ENCODE measurements at regions of chr17 and their contacts with region 1.

Region 1: GRCh38 chr17:30093463-30094147 is 23.0 kb upstream of the NSRP1 start:
- DNase-seq: peak; percentile 42
- ATAC-seq: peak; percentile 92
- H3K4me3 ChIP-seq: no peak overlapping the region
- H3K27ac ChIP-seq: no peak overlapping the region
- H3K4me1 ChIP-seq: peaks cover 3% of the 10 kb centered on the region; the same call in 1 of the 2 replicates
- H3K27me3 ChIP-seq: no peaks in the 10 kb centered on the region
- CTCF ChIP-seq: peak; percentile 84

Region 2: DNA sequence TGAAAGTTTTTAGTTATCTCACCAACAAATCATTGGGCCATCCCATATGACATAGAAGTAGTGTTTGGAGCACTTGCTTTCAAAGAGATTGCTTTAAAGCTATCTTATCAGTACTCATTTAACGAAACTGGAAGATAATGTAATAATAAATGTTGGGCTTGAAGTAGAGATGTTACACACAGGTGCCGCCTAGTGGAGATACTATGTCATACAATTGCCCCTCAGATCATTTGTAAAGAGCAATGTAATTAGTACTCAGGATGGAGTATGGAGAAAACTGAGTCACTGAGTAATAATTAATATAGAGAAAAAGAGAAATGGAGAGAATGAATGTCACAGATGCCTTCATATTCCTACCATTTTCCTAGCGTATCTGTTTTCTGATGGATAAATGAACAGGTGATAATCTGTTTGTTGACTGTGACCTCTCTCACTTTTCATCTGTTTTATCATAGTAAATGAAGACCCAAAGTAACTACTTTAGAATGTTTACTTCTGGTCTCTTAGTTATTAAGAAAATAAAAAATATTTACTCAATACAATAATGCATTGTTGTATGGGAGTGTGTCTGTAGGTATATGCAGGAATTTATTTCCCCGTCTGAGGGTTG is 71.8 kb before region 1 on chr17:
- CTCF ChIA-PET with region 1: interaction called, 13 read pairs
- POLR2A ChIA-PET with region 1: interaction called, 3 read pairs
- in situ Hi-C with region 1: no loop called
- intact Hi-C with region 1: loop called (anchors 1 kb)
- DNase-seq: peak; percentile 28
- ATAC-seq: peak; percentile 80
- H3K4me3 ChIP-seq: no peak overlapping the region
- H3K27ac ChIP-seq: no peak overlapping the region
- H3K4me1 ChIP-seq: no peaks in the 10 kb centered on the region
- H3K27me3 ChIP-seq: no peaks in the 10 kb centered on the region
- CTCF ChIP-seq: peak; percentile 81; the same call in 1 of the 2 replicates

Region 3: GRCh38 chr17:30027676-30028075 is 65.9 kb before region 1 on chr17:
- CTCF ChIA-PET with region 1: interaction called, 13 read pairs
- POLR2A ChIA-PET with region 1: interaction called, 7 read pairs
- in situ Hi-C with region 1: no loop called
- intact Hi-C with region 1: loop called (anchors 1 kb)
- DNase-seq: no peak
- ATAC-seq: no peak
- H3K4me3 ChIP-seq: no peak overlapping the region
- H3K27ac ChIP-seq: no peak overlapping the region
- H3K4me1 ChIP-seq: no peaks in the 10 kb centered on the region
- H3K27me3 ChIP-seq: peaks cover 2% of the 10 kb centered on the region; the same call in 1 of the 2 replicates
- CTCF ChIP-seq: no peak

Measured in Panc1 (cell line).